Tibial artery (tissue), 4 donors: ENCODE measurements at regions of chr17 and their contacts with region 1.

Region 1: GRCh38 chr17:28812091-28812747 is 30.4 kb downstream of the FAM222B start:
- DNase-seq: peak; percentile 97 to 98
- H3K4me3 ChIP-seq: peak overlapping the region; percentile 78 to 86
- H3K27ac ChIP-seq: peak overlapping the region; percentile 82 to 88
- H3K4me1 ChIP-seq: peaks cover 0 to 52% (median 31%) of the 10 kb centered on the region in 4 donors
- H3K27me3 ChIP-seq: no peaks in the 10 kb centered on the region
- CTCF ChIP-seq: no peak

Region 2: GRCh38 chr17:28743225-28744103 is 68.8 kb before region 1 on chr17 and contains the start of gene TRAF4:
- intact Hi-C with region 1: loop called (anchors 10 kb)
- DNase-seq: peak; percentile 77 to 88
- H3K4me3 ChIP-seq: peak within 1 kb of the TSS; percentile 63 to 73
- H3K27ac ChIP-seq: peak within 1 kb of the TSS; percentile 81 to 83
- H3K4me1 ChIP-seq: peaks cover 0 to 65% (median 44%) of the 10 kb centered on the region in 4 donors
- H3K27me3 ChIP-seq: no peaks in the 10 kb centered on the region
- CTCF ChIP-seq: peak in 1 of 2 experiments; percentile 41

Region 3: GRCh38 chr17:28871056-28871579 is 58.9 kb after region 1 on chr17:
- intact Hi-C with region 1: no loop called
- DNase-seq: no peak
- H3K4me3 ChIP-seq: no peak overlapping the region
- H3K27ac ChIP-seq: no peak overlapping the region
- H3K4me1 ChIP-seq: no peaks in the 10 kb centered on the region
- H3K27me3 ChIP-seq: no peaks in the 10 kb centered on the region
- CTCF ChIP-seq: no peak

Region 4: GRCh38 chr17:28896884-28897768 is 84.9 kb after region 1 on chr17 and contains the start of gene FLOT2:
- intact Hi-C with region 1: loop called (anchors 5 kb)
- DNase-seq: peak; percentile 78 to 86
- H3K4me3 ChIP-seq: peak within 1 kb of the TSS; percentile 81 to 86
- H3K27ac ChIP-seq: peak within 1 kb of the TSS; percentile 92 to 94
- H3K4me1 ChIP-seq: peaks cover 0 to 62% (median 44%) of the 10 kb centered on the region in 4 donors
- H3K27me3 ChIP-seq: no peaks in the 10 kb centered on the region
- CTCF ChIP-seq: peak in 1 of 2 experiments; percentile 19